IMR-90 (cell line): ENCODE measurements at regions of chr7 and their contacts with region 1.

Region 1: DNA sequence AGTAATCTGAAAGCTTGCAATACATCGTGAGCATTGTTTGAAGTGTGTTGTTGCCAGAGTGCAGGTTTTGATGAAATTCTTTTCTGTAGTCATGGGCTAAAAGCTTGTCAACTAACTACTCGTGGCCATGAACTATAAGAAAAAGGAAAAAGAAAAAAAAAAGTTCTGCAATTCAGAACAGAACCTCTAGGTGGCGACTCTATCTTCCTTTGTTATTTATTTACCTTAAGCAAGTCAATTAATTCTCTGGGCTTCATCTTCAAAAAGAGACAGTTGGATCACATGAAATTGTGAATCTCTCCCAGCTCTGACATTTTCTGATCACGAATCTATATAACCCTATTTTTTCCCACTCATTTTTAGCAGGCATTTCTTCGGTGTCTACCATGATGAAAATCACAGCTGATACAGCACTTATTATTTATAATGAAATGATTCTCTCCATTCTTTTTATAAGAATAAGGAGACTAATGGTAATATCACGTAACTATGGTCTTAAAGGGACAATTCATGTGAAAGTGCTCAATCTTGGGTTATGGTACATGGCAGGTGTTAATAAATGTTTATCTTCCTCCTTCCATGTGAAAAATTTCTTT is 18.8 kb downstream of the TMEM196 start:
- DNase-seq: peak; percentile 12
- ATAC-seq: no peak
- H3K4me3 ChIP-seq: no peak overlapping the region
- H3K27ac ChIP-seq: no peak overlapping the region
- H3K4me1 ChIP-seq: no peaks in the 10 kb centered on the region
- H3K27me3 ChIP-seq: no peaks in the 10 kb centered on the region
- CTCF ChIP-seq: peak; percentile 62
- POLR2A ChIP-seq: no peak
- RAD21 ChIP-seq: peak; percentile 57

Region 2: DNA sequence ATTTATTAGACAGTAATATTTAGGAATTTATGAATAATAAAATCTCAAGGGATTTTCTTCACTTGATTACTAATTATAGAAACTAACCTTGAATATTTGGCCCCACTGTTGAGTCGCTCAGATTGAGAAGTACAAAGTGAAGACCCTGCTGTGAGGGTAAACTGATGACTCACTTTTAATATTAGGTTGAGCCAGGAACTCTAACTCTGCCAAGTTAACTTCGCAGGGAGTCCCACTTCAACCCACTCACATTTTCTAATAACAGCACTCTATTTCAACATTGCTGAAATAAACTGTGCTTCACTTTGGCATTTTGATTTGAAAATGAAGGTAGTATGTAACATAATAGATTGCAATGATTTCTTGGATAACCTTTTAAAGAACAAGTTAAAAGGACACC is 246.5 kb before region 1 on chr7:
- CTCF ChIA-PET with region 1: no interaction called
- POLR2A ChIA-PET with region 1: no interaction called
- dilution Hi-C with region 1: no loop called
- in situ Hi-C with region 1: no loop called
- intact Hi-C with region 1: no loop called
- DNase-seq: no peak
- ATAC-seq: no peak
- H3K4me3 ChIP-seq: no peak overlapping the region
- H3K27ac ChIP-seq: no peak overlapping the region
- H3K4me1 ChIP-seq: no peaks in the 10 kb centered on the region
- H3K27me3 ChIP-seq: no peaks in the 10 kb centered on the region
- CTCF ChIP-seq: no peak
- POLR2A ChIP-seq: no peak
- RAD21 ChIP-seq: no peak

Region 3: GRCh38 chr7:20172736-20173334 is 418.2 kb after region 1 on chr7:
- CTCF ChIA-PET with region 1: no interaction called
- POLR2A ChIA-PET with region 1: no interaction called
- dilution Hi-C with region 1: no loop called
- in situ Hi-C with region 1: loop called (anchors 25 kb)
- intact Hi-C with region 1: loop called (anchors 10 kb)
- DNase-seq: peak; percentile 40
- ATAC-seq: peak; percentile 63; the same call in 1 of the 2 replicates
- H3K4me3 ChIP-seq: no peak overlapping the region
- H3K27ac ChIP-seq: no peak overlapping the region
- H3K4me1 ChIP-seq: no peaks in the 10 kb centered on the region
- H3K27me3 ChIP-seq: no peaks in the 10 kb centered on the region
- CTCF ChIP-seq: peak; percentile 37
- POLR2A ChIP-seq: no peak
- RAD21 ChIP-seq: peak; percentile 36; the same call in 1 of the 2 replicates

Region 4: DNA sequence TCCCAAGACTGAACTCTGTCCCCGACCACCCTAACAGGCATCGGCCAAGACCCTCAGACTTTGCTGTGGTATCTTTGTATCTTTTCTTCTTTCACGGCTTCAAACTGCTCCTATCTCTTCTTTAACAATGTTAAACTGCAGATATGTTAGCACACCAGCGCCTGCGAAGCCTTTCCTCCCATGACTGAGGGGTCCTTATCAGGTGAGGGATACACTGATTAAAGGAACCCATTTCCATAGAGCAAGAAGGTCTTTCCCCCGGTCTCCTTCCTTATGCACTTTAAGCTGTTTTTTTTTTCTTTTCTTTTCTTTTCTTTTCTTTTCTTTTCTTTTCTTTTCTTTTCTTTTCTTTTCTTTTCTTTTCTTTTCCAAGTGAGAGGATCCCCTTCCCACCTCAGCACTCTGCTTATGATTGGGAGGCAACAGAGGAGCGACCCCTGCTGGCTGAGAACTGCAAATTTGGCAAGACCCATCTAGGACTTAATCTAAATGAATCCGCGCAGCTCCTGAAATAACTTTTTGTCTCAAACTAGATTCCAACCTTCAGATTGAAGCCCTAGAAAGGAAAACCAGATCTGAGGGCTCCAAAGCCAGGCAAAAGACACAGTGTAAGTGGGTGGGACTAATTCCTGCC is 686.0 kb after region 1 on chr7:
- CTCF ChIA-PET with region 1: no interaction called
- POLR2A ChIA-PET with region 1: no interaction called
- dilution Hi-C with region 1: no loop called
- in situ Hi-C with region 1: no loop called
- intact Hi-C with region 1: loop called (anchors 5 kb)
- DNase-seq: peak; percentile 62
- ATAC-seq: peak; percentile 37; the same call in 1 of the 2 replicates
- H3K4me3 ChIP-seq: no peak overlapping the region
- H3K27ac ChIP-seq: no peak overlapping the region
- H3K4me1 ChIP-seq: no peaks in the 10 kb centered on the region; the same call in 1 of the 2 replicates
- H3K27me3 ChIP-seq: no peaks in the 10 kb centered on the region; the same call in 1 of the 2 replicates
- CTCF ChIP-seq: peak; percentile 65
- POLR2A ChIP-seq: no peak
- RAD21 ChIP-seq: peak; percentile 59